PC-3 (cell line): ENCODE measurements at regions of chr2 and their contacts with region 1.

Region 1: DNA sequence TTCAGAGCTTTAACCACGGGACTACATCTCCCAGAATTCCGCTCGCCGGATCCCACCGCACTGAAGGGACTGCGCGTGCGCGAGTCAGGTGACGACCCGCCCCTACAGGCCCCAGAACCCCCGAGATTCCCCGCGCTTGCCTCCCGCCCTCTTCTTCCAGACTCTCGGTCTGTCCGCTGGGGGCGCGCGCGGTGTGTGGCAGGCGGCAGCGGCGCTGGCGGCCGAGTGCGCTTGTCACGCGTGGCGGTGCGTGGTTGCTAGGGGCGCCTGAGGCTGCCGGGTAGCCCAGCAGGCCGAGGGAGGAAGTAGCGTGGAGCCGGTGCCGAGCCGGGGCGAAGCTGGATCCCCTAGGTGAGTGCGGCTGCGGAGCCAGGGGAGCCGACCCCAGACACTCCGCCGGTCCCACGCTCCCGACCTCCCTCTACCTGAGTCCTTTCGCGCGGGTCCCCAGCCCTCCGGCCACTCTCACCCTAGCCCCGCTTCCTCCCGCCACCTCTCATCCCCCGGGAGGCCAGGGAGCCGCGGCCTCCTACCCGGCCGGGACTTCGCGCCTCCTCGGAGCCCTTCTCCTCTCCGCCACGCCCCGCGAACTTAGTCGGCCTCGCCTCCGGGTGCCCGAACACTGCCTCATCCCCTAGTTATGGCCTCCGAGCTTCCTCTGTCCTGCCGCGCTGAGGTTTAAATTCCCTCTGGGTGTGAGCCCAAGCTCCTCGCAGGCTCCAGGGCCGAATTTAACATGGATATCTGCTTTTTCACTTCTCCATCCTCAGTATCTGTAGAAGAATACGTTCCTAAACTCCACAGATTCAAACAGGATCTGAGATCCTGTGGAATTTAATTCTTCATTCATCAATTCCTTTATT is at the start of gene TTLL4:
- DNase-seq: peak; percentile 96
- ATAC-seq: peak; percentile 91
- H3K4me3 ChIP-seq: peak within 1 kb of the TSS; percentile 84
- H3K27ac ChIP-seq: peak within 1 kb of the TSS; percentile 59
- H3K4me1 ChIP-seq: peaks cover 21% of the 10 kb centered on the region
- H3K27me3 ChIP-seq: no peaks in the 10 kb centered on the region
- CTCF ChIP-seq: peak; percentile 85
- total RNA-seq, gene TTLL4: 21.0 and 32.9 TPM in 2 replicates

Region 2: DNA sequence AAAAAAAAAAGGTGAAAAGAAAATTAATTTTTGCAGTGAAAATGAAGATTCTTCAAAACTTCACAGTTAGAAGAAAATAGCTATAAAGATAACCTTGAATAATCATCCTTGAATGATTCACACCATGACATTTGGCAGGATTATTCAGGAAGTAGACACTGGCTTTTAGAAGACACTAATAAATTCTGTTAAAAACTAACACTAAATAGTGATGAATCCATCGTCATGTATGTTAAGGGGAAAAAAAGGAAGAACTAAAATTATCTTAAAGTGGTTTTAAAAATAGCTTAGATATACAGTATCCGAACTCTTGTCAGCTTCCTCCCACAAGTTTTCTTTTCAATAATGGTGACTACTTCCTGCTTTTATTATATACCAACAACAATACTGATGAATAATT is 153.0 kb before region 1 on chr2:
- CTCF ChIA-PET with region 1: no interaction called
- POLR2A ChIA-PET with region 1: no interaction called
- intact Hi-C with region 1: no loop called
- DNase-seq: no peak
- ATAC-seq: peak; percentile 27
- H3K4me3 ChIP-seq: no peak overlapping the region
- H3K27ac ChIP-seq: no peak overlapping the region
- H3K4me1 ChIP-seq: no peaks in the 10 kb centered on the region
- H3K27me3 ChIP-seq: no peaks in the 10 kb centered on the region
- CTCF ChIP-seq: no peak

Region 3: GRCh38 chr2:218631837-218632236 is 79.1 kb before region 1 on chr2:
- CTCF ChIA-PET with region 1: no interaction called
- POLR2A ChIA-PET with region 1: no interaction called
- intact Hi-C with region 1: no loop called
- DNase-seq: peak; percentile 94
- ATAC-seq: peak; percentile 88
- H3K4me3 ChIP-seq: no peak overlapping the region
- H3K27ac ChIP-seq: peak overlapping the region; percentile 88
- H3K4me1 ChIP-seq: peaks cover 21% of the 10 kb centered on the region
- H3K27me3 ChIP-seq: no peaks in the 10 kb centered on the region
- CTCF ChIP-seq: no peak

Region 4: GRCh38 chr2:218659258-218659987 is 51.5 kb before region 1 on chr2 and contains the starts of genes BCS1L and ZNF142:
- CTCF ChIA-PET with region 1: interaction called, 5 read pairs
- POLR2A ChIA-PET with region 1: no interaction called
- intact Hi-C with region 1: loop called (anchors 2 kb)
- DNase-seq: peak; percentile 91
- ATAC-seq: peak; percentile 92
- H3K4me3 ChIP-seq: peak within 1 kb of the TSS; percentile 100
- H3K27ac ChIP-seq: peak within 1 kb of the TSS; percentile 61
- H3K4me1 ChIP-seq: peaks cover 20% of the 10 kb centered on the region
- H3K27me3 ChIP-seq: no peaks in the 10 kb centered on the region
- CTCF ChIP-seq: no peak
- total RNA-seq, gene BCS1L: 41.3 and 48.5 TPM in 2 replicates
- total RNA-seq, gene ZNF142: 35.5 and 36.3 TPM in 2 replicates

Region 5: DNA sequence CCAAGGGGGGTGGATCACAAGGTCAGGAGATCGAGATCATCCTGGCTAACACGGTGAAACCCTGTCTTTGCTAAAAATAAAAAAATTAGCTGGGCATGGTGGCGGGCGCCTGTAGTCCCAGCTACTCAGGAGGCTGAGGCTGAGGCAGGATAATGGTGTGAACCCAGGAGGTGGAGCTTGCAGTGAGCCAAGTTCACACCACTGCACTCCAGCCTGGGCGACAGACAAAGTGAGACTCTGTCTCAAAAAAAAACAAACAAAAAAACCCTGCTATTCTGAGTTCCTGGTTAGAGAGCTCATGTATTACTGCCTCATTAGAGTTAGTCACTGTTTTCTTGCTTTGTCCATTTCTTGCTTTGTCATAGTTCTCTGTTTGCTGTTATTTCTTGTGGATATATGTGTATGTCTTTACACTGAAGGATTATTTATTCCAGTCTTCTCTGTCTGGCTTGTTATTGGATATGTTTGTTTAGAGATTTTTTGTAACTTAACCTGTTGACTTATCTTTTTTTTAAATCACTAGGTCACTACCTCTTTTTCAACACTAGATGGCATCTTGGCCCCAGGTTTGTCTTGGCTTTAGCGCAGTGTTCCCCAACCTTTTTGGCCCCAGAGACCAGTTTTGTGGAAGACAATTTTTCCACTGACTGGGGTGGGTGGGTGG is 16.7 kb after region 1 on chr2:
- CTCF ChIA-PET with region 1: interaction called, 4 read pairs
- POLR2A ChIA-PET with region 1: interaction called, 4 read pairs
- intact Hi-C with region 1: loop called (anchors 2 kb)
- DNase-seq: peak; percentile 65
- ATAC-seq: peak; percentile 34
- H3K4me3 ChIP-seq: no peak overlapping the region
- H3K27ac ChIP-seq: peak overlapping the region; percentile 6; the same call in 1 of the 2 replicates
- H3K4me1 ChIP-seq: peaks cover 20% of the 10 kb centered on the region
- H3K27me3 ChIP-seq: no peaks in the 10 kb centered on the region
- CTCF ChIP-seq: peak; percentile 67

Region 6: GRCh38 chr2:218781691-218782527 is 71.0 kb after region 1 on chr2 and contains the start of gene CYP27A1:
- CTCF ChIA-PET with region 1: no interaction called
- POLR2A ChIA-PET with region 1: no interaction called
- intact Hi-C with region 1: loop called (anchors 5 kb)
- DNase-seq: peak; percentile 23
- ATAC-seq: peak; percentile 81
- H3K4me3 ChIP-seq: peak within 1 kb of the TSS; percentile 79
- H3K27ac ChIP-seq: no peak within 1 kb of the TSS
- H3K4me1 ChIP-seq: peaks cover 10% of the 10 kb centered on the region
- H3K27me3 ChIP-seq: no peaks in the 10 kb centered on the region
- CTCF ChIP-seq: no peak
- total RNA-seq, gene CYP27A1: 5.8 and 6.0 TPM in 2 replicates

Region 7: DNA sequence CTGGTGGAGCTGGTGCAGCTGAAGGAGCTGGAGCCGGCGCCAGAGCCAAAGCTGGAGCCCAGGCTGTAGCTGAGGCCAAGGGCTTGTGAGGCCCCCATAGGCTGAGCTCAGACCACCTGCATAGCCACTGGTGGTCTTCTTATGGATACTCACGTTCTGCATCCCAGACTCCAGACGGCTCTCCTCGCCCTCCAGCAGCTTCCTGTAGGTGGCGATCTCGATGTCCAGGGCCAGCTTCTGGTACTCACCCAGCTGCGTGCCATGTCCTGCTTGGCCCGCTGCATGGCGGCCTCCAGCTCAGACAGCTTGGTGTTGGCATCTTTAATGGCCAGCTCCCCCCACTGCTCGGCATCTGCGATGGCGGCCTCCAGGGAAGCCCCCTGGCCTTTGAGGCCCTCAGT is 242.6 kb after region 1 on chr2:
- CTCF ChIA-PET with region 1: no interaction called
- POLR2A ChIA-PET with region 1: interaction called, 12 read pairs
- intact Hi-C with region 1: no loop called
- DNase-seq: no peak
- ATAC-seq: no peak
- H3K4me3 ChIP-seq: no peak overlapping the region
- H3K27ac ChIP-seq: no peak overlapping the region
- H3K4me1 ChIP-seq: no peaks in the 10 kb centered on the region
- H3K27me3 ChIP-seq: peaks cover 7% of the 10 kb centered on the region; the same call in 1 of the 2 replicates
- CTCF ChIP-seq: no peak; the same call in 1 of the 2 replicates